ENCODE measurements at regions of chr6 and their contacts with region 1.

Region 1: GRCh38 chr6:142952614-142953013 is 7.6 kb upstream of the HIVEP2 start:
- DNase-seq: peak; percentile 51
- CTCF ChIP-seq: no peak

Region 2: GRCh38 chr6:142566628-142567396 is 385.8 kb before region 1 on chr6:
- in situ Hi-C with region 1: loop called (anchors 25 kb)
- DNase-seq: peak; percentile 61
- CTCF ChIP-seq: peak; percentile 93

Region 3: GRCh38 chr6:143689848-143690247 is 737.2 kb after region 1 on chr6:
- in situ Hi-C with region 1: no loop called
- DNase-seq: no peak
- CTCF ChIP-seq: no peak